BJ (cell line): ENCODE measurements at regions of chr2 and their contacts with region 1.

Region 1: DNA sequence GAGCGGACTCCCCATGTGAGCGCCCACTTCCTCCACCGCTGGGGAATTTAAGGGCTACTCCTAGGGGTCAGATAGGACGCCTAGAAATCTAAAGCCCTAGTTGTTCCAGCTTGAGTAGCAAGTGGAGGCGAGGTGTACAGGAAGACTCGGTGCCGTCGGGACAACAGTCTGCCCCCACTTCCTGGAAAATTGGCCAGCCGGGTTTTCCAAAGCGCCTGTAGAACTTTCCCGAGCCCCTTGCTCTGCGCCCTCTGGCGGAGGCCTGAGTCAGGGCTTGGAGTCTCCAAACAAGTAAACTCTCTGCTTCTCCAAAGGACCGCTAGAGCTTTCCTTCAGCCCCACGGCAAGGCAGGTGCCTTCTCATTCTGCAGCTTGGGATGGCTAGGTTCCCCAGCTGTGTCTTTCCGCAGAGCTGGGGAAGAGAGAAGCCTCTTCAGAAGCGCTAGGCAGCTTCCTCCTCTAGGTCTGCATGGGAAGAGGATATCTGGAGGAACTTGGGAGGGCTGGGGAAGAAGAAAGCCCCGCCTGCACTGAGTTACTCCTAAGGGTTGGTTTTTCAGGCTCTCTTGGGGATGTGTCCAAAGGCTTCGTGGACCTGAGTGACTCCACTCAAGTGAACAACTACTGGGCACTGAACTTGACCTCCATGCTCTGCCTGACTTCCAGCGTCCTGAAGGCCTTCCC is 688 bp downstream of the SPR start:
- DNase-seq: no peak
- H3K4me3 ChIP-seq: peak overlapping the region; percentile 60
- H3K27me3 ChIP-seq: peaks cover 2% of the 10 kb centered on the region
- CTCF ChIP-seq: peak; percentile 99

Region 2: GRCh38 chr2:72185206-72185605 is 702.7 kb before region 1 on chr2:
- CTCF ChIA-PET with region 1: no interaction called
- POLR2A ChIA-PET with region 1: no interaction called
- DNase-seq: no peak
- H3K4me3 ChIP-seq: no peak overlapping the region
- H3K27me3 ChIP-seq: no peaks in the 10 kb centered on the region
- CTCF ChIP-seq: no peak

Region 3: DNA sequence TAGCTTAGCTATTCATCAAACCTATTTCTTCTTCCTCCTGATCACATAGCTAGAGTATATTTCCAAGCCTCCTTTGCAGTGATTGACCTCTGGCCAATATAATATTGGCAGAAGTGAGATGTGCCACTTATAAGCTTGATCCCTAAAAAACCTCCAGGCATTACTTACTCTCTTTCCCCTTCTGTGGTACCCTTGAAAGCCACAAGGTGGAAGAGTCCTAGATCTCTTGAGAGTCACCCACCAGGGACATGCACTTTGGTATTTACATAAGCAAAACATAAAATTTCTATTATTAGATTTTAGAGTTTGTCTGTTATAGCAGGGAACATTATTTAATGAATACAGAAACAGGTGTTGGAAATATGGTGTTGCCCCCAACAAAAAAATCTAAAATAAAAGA is 174.0 kb before region 1 on chr2:
- CTCF ChIA-PET with region 1: no interaction called
- POLR2A ChIA-PET with region 1: no interaction called
- DNase-seq: no peak
- H3K4me3 ChIP-seq: no peak overlapping the region
- H3K27me3 ChIP-seq: no peaks in the 10 kb centered on the region
- CTCF ChIP-seq: no peak

Region 4: DNA sequence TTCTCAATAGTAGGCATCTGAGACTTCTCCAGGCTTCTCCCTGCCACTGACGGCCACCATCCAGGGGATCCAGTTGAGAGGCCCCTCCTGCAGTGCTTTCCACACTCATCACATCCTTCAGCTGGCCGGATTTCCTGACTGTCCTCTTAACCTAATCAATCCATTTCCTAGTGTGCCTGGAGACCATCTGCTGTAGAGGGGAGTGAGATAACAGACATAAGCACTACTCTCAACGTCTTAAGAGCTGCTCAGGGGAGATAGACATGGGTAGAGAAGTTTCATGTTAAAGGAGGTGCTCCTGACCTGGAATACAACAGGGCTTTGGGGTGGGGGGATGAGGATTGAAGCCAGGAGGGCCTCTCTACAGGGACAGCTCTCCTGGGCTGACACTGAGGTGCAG is 13.5 kb after region 1 on chr2:
- CTCF ChIA-PET with region 1: interaction called, 29 read pairs
- POLR2A ChIA-PET with region 1: no interaction called
- DNase-seq: no peak
- H3K4me3 ChIP-seq: no peak overlapping the region
- H3K27me3 ChIP-seq: peaks cover 26% of the 10 kb centered on the region
- CTCF ChIP-seq: no peak

Region 5: GRCh38 chr2:72973566-72974435 is 85.9 kb after region 1 on chr2:
- CTCF ChIA-PET with region 1: interaction called, 122 read pairs
- POLR2A ChIA-PET with region 1: no interaction called
- DNase-seq: no peak
- H3K4me3 ChIP-seq: no peak overlapping the region
- H3K27me3 ChIP-seq: no peaks in the 10 kb centered on the region
- CTCF ChIP-seq: peak; percentile 93

Region 6: DNA sequence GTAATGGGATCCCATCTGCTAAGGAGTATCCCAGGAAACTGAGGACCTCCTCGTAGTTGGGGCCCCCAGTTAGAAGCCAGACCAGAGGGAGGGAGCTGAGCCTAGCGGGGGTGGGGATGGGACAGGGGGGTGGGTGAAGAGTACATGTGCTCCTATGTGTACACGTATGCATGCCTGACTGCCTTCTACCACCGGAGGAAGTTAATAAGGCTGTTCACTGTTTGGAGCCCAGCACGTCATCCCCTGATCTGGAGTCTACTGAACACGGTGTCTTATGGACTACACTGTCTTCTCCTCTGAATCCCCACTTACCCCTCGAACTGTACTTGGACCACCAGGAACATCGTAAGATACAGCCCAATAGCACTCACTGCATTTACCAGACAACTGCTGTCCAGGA is 115.1 kb after region 1 on chr2:
- CTCF ChIA-PET with region 1: no interaction called
- POLR2A ChIA-PET with region 1: no interaction called
- DNase-seq: no peak
- H3K4me3 ChIP-seq: no peak overlapping the region
- H3K27me3 ChIP-seq: no peaks in the 10 kb centered on the region
- CTCF ChIP-seq: no peak

Region 7: DNA sequence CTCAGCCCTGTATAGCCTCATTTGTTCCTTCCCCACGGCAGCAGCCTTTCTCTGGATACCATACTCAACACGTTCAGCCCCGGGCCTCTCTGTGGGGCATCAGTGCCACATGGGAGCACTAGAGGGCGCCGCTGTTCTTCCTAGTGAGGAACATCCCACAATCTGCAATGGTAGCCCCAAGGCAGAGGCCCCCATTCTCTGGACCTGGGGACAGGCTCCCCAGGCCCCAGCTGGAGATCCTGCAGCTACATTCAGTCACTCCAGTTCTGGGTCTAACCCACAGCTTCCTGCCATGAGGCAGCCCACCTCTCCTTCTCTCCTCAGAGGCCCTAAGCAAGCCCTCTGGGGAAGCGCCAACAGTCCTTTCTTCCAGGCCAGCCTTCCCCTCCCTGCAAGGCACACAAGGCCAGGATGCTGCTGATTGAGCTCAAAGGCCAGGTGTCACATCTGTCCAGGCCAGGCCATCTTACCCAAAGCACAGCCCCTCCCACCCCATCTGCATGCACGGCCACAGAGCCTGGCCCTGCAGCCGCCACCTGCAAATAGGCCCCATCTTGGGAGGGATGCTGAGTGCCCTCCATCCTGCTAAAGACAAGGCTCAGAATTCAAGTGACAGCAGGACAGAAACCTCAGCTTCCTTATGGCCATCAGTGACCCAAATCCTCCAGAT is 197.9 kb after region 1 on chr2:
- CTCF ChIA-PET with region 1: interaction called, 39 read pairs
- POLR2A ChIA-PET with region 1: no interaction called
- DNase-seq: no peak
- H3K4me3 ChIP-seq: no peak overlapping the region
- H3K27me3 ChIP-seq: no peaks in the 10 kb centered on the region
- CTCF ChIP-seq: peak; percentile 98

Region 8: GRCh38 chr2:73176881-73177644 is 289.2 kb after region 1 on chr2:
- CTCF ChIA-PET with region 1: interaction called, 144 read pairs
- POLR2A ChIA-PET with region 1: no interaction called
- DNase-seq: no peak
- H3K4me3 ChIP-seq: peak overlapping the region; percentile 78
- H3K27me3 ChIP-seq: peaks cover 12% of the 10 kb centered on the region
- CTCF ChIP-seq: peak; percentile 99